ENCODE measurements at regions of chr18 and their contacts with region 1.

Region 1: GRCh38 chr18:76499637-76500340 is 4.7 kb upstream of the ZNF516 start:
- DNase-seq: peak in 1 of 9 experiments; percentile 31
- ATAC-seq: no peak
- H3K4me3 ChIP-seq: no peak overlapping the region
- H3K4me3 Mint-ChIP-seq: no peak overlapping the region
- H3K27ac ChIP-seq: no peak overlapping the region
- H3K27ac Mint-ChIP-seq: no peak overlapping the region
- H3K4me1 ChIP-seq: peaks cover 4% of the 10 kb centered on the region
- H3K4me1 Mint-ChIP-seq: peaks cover 4% of the 10 kb centered on the region
- H3K27me3 ChIP-seq: peaks cover 0 to 4% of the 10 kb centered on the region in 2 experiments
- H3K27me3 Mint-ChIP-seq: peaks cover 19% of the 10 kb centered on the region
- CTCF ChIP-seq: no peak

Region 2: GRCh38 chr18:76480913-76481312 is 18.9 kb before region 1 on chr18:
- CTCF ChIA-PET with region 1: no interaction called
- POLR2A ChIA-PET with region 1: no interaction called
- intact Hi-C with region 1: loop called in 1 of 2 experiments (anchors 2 kb)
- DNase-seq: no peak
- ATAC-seq: no peak
- H3K4me3 ChIP-seq: no peak overlapping the region
- H3K4me3 Mint-ChIP-seq: no peak overlapping the region
- H3K27ac ChIP-seq: no peak overlapping the region
- H3K27ac Mint-ChIP-seq: no peak overlapping the region
- H3K4me1 ChIP-seq: no peaks in the 10 kb centered on the region
- H3K4me1 Mint-ChIP-seq: peaks cover 16% of the 10 kb centered on the region
- H3K27me3 ChIP-seq: no peaks in the 10 kb centered on the region
- H3K27me3 Mint-ChIP-seq: peaks cover 4% of the 10 kb centered on the region
- CTCF ChIP-seq: no peak

Region 3: GRCh38 chr18:76657428-76657827 is 157.6 kb after region 1 on chr18:
- CTCF ChIA-PET with region 1: no interaction called
- POLR2A ChIA-PET with region 1: no interaction called
- intact Hi-C with region 1: no loop called
- DNase-seq: no peak
- ATAC-seq: no peak
- H3K4me3 ChIP-seq: no peak overlapping the region
- H3K4me3 Mint-ChIP-seq: no peak overlapping the region
- H3K27ac ChIP-seq: no peak overlapping the region
- H3K27ac Mint-ChIP-seq: no peak overlapping the region
- H3K4me1 ChIP-seq: peaks cover 16% of the 10 kb centered on the region
- H3K4me1 Mint-ChIP-seq: peaks cover 17% of the 10 kb centered on the region
- H3K27me3 ChIP-seq: peaks cover 4 to 12% of the 10 kb centered on the region in 2 experiments
- H3K27me3 Mint-ChIP-seq: peaks cover 37% of the 10 kb centered on the region
- CTCF ChIP-seq: no peak